Activated T-helper 2 cell treated with anti-CD3 and anti-CD28 coated beads, Interferon-gamma antibody, Interleukin-2, Interleukin-4, amounts not matched to agents 10 μg/mL and 5 μg/mL and 100 μg/mL, durations not matched to agents 14 hours and 24 hours and 36 hours (primary cell): ENCODE measurements at regions of chr1 and their contacts with region 1.

Region 1: DNA sequence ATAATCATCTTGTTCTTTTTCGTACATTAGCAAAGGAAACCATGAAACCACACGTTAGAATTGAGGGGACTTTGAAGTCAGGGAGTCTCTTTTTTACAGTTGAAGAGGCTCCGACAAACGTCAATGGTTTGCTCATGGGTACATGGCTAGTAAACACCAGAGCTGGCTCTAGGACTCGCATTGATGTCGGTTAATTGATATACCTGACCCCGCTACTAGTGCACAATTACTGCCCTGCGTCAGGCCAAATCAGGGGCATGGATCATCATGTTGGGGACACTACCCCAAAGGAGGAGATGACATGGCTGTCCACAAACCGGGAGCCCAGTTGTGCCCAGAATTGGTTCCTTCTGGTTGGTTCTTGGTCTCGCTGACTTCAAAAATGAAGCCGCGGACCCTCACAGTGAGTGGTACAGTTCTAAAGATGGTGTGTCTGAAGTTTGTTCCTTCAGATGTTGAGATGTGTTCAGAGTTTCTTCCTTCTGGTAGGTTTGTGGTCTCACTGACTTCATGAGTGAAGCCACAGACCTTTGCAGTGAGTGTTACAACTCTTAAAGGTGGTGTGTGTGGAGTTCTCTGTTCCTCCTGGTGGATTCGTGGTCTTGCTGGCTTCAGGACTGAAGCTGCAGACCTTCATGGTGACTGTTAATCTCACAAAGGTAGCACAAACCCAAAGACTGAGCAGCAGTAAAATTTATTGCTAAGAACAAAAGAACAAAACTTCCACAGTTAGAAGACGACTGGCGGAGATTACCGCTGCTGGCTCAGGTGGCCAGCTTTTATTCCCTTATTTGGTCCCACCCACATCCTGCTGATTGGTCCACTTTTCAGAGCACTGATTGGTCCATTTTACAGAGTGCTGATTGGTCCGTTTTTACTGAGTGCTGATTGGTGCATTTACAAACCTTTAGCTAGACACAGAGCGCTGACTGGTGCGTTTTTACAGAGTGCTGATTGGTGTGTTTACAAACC is 126.9 kb upstream of the ERRFI1 start:
- DNase-seq: peak; percentile 47
- H3K4me3 Mint-ChIP-seq: peak overlapping the region; percentile 32
- H3K27ac Mint-ChIP-seq: peak overlapping the region; percentile 94
- H3K4me1 Mint-ChIP-seq: peaks cover 36% of the 10 kb centered on the region
- H3K27me3 Mint-ChIP-seq: peaks cover 2% of the 10 kb centered on the region

Region 2: DNA sequence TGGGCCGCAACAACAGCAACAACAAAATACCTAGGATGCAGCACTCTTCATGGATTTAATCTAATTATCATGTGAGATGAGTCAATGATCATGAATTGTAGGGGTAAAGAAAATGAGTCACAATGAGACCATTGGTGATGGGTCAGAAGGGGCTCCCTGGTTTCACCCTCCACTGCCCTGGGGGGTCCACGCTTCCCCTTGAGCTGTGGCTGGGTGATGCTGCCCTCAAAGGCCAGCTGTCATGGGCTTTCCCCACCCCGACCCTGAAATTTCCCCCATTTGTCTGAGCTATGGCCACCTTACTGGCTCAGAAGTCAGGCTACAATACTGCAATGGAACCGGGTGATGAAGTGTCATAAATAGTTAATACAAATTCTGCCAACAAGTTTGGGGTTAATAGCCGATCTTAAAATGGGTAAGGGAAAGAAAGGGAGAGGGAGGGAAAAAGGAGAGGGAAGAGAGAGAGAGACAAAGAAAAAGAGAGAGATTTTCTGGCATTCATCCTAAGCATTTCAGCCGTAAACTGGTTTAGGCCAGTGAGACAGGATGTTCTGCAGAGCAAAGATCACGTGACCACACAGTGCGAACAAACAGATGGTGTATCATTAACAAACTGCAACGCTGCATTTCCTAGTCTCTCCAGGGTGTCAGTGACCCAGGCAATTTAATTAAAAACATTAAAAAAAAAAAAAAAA is 16.5 kb after region 1 on chr1:
- intact Hi-C with region 1: loop called (anchors 2 kb)
- DNase-seq: peak; percentile 45
- H3K4me3 Mint-ChIP-seq: peak overlapping the region; percentile 10
- H3K27ac Mint-ChIP-seq: peak overlapping the region; percentile 92
- H3K4me1 Mint-ChIP-seq: peaks cover 30% of the 10 kb centered on the region
- H3K27me3 Mint-ChIP-seq: no peaks in the 10 kb centered on the region